HepG2 (cell line): ENCODE measurements at regions of chr12 and their contacts with region 1.

Region 1: DNA sequence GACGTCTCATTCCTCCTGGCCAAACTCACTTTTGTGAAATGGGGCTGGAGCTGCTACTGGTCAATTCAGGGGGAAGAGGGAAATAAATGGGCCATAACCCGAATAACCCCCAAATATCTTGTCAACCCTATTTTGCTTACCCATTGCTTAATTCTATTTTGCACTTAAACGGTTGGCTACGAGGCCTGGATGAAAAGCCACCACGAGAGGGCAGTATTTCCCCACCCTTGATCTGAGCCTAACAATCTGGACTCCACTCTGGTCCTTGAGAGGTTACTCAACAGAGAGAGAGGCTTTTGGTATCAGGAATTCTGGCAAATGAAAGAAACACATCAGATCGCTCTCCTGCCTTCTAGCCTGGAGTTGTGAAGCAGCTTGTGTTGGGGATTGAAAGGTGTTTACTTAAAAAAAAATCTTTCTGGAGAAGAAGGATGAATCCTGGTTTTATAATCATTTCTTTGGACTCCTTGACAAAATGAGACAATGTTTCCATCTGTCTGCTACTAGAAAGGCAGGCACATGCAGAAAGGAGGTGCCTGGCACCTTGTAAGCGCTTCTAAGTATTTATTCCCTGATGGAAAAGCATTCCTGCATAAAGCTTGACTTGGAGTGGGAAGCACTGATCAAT is 22.4 kb upstream of the FBXO21 start:
- DNase-seq: peak; percentile 46
- ATAC-seq: peak; percentile 85
- H3K4me3 ChIP-seq: no peak overlapping the region
- H3K27ac ChIP-seq: no peak overlapping the region
- H3K4me1 ChIP-seq: no peaks in the 10 kb centered on the region
- H3K27me3 ChIP-seq: peaks cover 6 to 33% of the 10 kb centered on the region in 2 experiments; a peak in 4 of 5 replicates
- CTCF ChIP-seq: peak; percentile 88
- EP300 ChIP-seq: no peak
- POLR2A ChIP-seq: no peak
- RAD21 ChIP-seq: peak; percentile 32; the same call in 1 of the 2 replicates

Region 2: GRCh38 chr12:117850048-117850447 is 637.4 kb after region 1 on chr12:
- CTCF ChIA-PET with region 1: no interaction called
- POLR2A ChIA-PET with region 1: no interaction called
- in situ Hi-C with region 1: no loop called
- intact Hi-C with region 1: loop called (anchors 5 kb)
- DNase-seq: peak; percentile 63
- ATAC-seq: peak; percentile 87
- H3K4me3 ChIP-seq: no peak overlapping the region
- H3K27ac ChIP-seq: no peak overlapping the region
- H3K4me1 ChIP-seq: peaks cover 15% of the 10 kb centered on the region
- H3K27me3 ChIP-seq: no peaks in the 10 kb centered on the region
- CTCF ChIP-seq: peak; percentile 69
- EP300 ChIP-seq: no peak
- POLR2A ChIP-seq: no peak
- RAD21 ChIP-seq: peak; percentile 13; the same call in 1 of the 2 replicates